ENCODE measurements at regions of chr20 and their contacts with region 1.

Region 1: DNA sequence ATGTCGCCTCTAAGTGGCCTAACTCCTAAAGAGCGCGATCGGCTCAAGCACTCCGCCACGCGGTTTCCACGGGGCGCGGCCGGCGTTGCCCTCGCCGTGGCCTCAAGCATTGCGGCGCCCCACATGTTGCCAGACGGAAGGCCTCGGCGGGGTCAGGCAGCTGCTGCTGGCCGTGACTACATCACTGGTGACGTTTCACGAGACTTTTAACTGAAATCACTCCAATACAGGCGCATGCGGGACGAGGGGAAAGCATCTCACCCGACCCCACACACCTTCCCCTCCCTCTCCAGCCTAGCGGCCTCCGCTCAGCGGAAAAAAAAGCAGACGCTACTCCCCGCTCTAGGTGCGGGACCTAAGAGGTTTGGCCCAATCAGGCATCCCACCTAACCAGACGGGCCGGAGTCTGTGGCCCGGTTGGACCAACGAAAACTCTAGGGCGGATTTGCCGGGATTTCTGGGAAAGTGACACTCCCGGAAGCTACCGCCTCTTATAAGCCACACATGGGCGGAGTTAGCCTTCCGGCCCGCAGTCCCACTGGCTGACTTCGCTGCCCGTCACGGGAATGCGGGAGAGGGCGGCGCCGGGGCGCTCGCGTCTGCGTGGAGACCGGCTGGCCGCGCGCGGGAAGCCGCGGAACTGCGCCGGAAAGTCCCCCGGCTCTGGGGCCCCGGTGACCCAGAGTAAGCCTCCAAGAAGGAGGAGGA is at the start of gene NXT1:
- DNase-seq: peak; percentile 98
- ATAC-seq: peak; percentile 96
- H3K4me3 ChIP-seq: peak within 1 kb of the TSS; percentile 66 to 73
- H3K27ac ChIP-seq: peak within 1 kb of the TSS; percentile 87 to 91
- H3K4me1 ChIP-seq: no peaks in the 10 kb centered on the region
- H3K27me3 ChIP-seq: no peaks in the 10 kb centered on the region
- total RNA-seq, gene NXT1: 14.5 to 18.7 TPM

Region 2: DNA sequence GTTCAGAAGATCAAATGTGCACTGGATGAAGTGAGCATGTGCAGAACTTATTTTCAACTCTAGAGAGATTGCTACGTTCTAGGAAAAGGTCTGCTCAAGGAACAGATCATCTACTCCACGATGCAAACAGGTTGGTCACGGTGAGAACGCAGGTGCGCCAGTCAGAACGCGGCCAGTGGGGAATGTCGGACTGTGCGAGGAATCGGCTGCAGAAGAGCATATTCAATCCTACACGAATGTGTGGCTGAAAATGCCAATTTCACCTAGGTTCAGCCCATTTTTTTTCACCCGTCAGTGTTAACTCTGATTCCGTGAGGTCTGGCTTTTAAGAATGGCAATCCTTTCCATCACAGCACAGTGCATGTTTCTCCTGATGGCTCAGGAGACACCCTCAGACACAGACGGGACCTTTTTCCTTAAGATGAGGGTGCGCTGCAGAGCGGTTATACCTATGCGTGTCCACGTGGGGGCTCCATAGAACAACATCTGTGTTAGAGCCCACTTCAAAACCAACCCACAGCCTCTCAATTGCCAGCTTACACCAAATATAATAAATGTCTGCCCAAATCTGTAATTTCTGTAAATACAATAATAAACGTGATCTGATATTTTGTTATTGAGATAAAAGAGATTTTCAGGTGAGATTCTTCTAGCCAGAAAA is 1016.3 kb before region 1 on chr20:
- intact Hi-C with region 1: loop called in 1 of 2 experiments (anchors 10 kb)
- DNase-seq: peak; percentile 62 to 80
- ATAC-seq: peak; percentile 80
- H3K4me3 ChIP-seq: no peak overlapping the region
- H3K27ac ChIP-seq: no peak overlapping the region
- H3K4me1 ChIP-seq: no peaks in the 10 kb centered on the region
- H3K27me3 ChIP-seq: no peaks in the 10 kb centered on the region

Region 3: GRCh38 chr20:22691369-22692118 is 658.8 kb before region 1 on chr20:
- intact Hi-C with region 1: loop called in 1 of 2 experiments (anchors 1 kb)
- DNase-seq: peak; percentile 87 to 89
- ATAC-seq: peak; percentile 93
- H3K4me3 ChIP-seq: no peak overlapping the region
- H3K27ac ChIP-seq: no peak overlapping the region
- H3K4me1 ChIP-seq: peaks cover 0 to 2% of the 10 kb centered on the region in 2 donors
- H3K27me3 ChIP-seq: no peaks in the 10 kb centered on the region

Region 4: GRCh38 chr20:23147964-23148730 is 202.2 kb before region 1 on chr20:
- intact Hi-C with region 1: loop called in 1 of 2 experiments (anchors 10 kb)
- DNase-seq: peak; percentile 89
- ATAC-seq: peak; percentile 82
- H3K4me3 ChIP-seq: no peak overlapping the region
- H3K27ac ChIP-seq: peak overlapping the region; percentile 79 to 87
- H3K4me1 ChIP-seq: peaks cover 0 to 2% of the 10 kb centered on the region in 2 donors
- H3K27me3 ChIP-seq: no peaks in the 10 kb centered on the region

Region 5: GRCh38 chr20:23257848-23258746 is 92.3 kb before region 1 on chr20:
- intact Hi-C with region 1: loop called in 1 of 2 experiments (anchors 5 kb)
- DNase-seq: no peak
- ATAC-seq: peak; percentile 84
- H3K4me3 ChIP-seq: no peak overlapping the region
- H3K27ac ChIP-seq: peak overlapping the region; percentile 8 to 67
- H3K4me1 ChIP-seq: no peaks in the 10 kb centered on the region
- H3K27me3 ChIP-seq: no peaks in the 10 kb centered on the region

Region 6: DNA sequence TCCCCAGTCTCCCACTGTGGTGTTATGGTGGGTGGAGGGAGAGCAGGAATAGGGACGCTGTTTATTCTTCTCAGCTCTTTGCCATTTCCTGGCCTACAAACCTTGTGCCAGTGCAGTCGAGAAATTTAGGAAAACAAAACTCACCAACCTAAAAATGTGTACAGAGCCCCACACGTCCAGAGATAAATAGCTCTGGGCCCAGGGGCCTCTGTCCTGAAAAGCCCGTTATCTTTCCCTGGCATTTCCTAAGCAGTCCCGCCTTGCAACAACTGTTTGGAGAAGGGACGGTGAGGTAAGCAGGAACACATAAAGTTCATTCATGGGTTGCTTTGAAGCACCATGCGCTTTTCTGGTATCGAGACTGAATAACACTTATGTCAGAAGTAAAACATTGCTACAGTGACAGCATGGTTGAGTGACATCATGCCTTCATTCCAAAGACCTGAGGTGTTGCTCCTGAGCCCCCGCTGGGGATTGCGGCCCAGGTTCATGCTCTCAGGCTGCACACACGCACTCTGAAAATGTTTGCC is 79.9 kb before region 1 on chr20:
- intact Hi-C with region 1: loop called in 1 of 2 experiments (anchors 5 kb)
- DNase-seq: no peak
- ATAC-seq: no peak
- H3K4me3 ChIP-seq: no peak overlapping the region
- H3K27ac ChIP-seq: peak overlapping the region; percentile 90 to 95
- H3K4me1 ChIP-seq: peaks cover 0 to 4% of the 10 kb centered on the region in 2 donors
- H3K27me3 ChIP-seq: no peaks in the 10 kb centered on the region

Measured in aorta (tissue), 5 donors.